CD8-positive, alpha-beta T cell (primary cell): ENCODE measurements at regions of chr11 and their contacts with region 1.

Region 1: DNA sequence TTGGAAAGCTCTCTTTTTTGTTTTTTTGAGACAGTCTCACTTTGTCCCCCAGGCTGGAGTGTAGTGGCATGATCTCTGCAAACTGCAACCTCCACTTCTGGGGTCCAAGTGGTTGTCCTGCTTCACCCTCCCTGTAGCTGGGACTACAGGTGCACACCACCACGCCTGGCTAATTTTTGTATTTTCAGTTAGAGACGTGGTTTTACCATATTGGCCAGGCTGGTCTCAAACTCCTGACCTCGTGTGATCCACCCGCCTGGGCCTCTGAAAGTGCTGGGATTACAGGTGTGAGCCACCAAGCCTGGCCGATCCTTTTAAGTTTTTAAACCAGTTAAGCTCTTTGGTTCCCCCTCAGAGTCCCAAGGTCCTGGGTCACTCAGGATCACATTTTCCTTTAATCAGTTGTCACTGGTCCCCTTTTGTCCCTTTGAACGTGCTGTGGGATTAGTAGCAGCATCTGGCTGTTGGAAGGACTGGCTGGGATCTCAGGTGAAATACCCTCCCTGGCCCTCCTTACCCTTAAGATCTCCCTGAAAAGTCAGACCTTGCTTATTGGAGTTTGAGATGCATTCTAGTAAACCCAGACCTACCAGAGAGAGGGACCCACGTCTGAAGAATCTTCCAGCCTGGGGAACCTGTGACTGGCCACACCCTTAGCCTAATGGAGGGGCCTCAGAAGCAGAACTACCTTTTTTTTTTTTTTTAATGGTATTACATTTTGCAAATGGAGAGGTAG is 8.1 kb downstream of the MALAT1 start:
- DNase-seq: peak in 6 of 9 experiments; percentile 32 to 74 (median 62)
- ATAC-seq: peak; percentile 37
- H3K4me3 ChIP-seq: peak overlapping the region in 1 of 2 experiments; percentile 72
- H3K4me3 Mint-ChIP-seq: no peak overlapping the region
- H3K27ac ChIP-seq: peak overlapping the region; percentile 34 to 67
- H3K27ac Mint-ChIP-seq: peak overlapping the region; percentile 89
- H3K4me1 ChIP-seq: peaks cover 41% of the 10 kb centered on the region
- H3K4me1 Mint-ChIP-seq: peaks cover 51% of the 10 kb centered on the region
- H3K27me3 ChIP-seq: no peaks in the 10 kb centered on the region
- H3K27me3 Mint-ChIP-seq: no peaks in the 10 kb centered on the region
- CTCF ChIP-seq: no peak

Region 2: DNA sequence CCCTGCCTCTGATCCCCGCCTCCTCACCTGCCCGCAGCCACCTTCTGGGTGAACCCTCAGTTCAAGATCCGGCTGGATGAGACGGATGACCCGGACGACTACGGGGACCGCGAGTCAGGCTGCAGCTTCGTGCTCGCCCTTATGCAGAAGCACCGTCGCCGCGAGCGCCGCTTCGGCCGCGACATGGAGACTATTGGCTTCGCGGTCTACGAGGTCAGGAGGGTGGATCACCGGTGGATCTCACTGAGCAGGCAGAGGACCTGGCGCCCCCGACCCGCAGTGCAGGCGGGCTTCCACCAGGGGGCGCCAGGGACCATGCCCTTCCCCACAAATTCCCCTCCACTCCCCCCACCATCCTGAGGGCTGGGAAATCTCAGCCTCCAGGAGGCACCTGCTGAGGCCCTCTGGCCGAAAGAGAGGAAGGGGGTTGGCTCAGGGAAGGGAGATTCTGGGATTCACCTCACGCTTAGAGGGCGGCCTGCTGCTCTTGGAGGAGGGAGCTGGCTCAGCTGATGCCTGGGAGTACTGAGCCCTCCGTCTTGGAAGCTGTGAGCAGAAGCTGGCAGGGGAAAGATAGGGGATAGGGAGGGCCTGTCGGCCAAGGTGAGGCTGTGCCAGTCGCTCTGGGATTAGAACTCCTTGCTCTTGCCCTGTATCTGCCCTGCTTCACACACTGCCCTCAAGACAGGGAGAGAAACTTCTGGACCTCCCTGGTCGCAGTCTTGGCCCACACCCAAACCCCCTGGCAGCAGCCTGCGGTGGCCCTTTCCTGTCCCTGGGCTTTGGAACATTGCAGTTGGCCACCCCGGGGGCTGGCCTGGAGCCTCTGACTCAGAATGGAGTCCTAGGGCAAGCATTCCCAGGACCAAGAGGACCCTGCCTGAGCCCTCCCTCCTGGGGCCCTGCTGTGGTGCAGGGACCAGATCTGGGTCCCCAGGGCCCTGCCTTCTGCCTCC is 302.0 kb before region 1 on chr11:
- CTCF ChIA-PET with region 1: interaction called, 3 read pairs
- POLR2A ChIA-PET with region 1: no interaction called
- intact Hi-C with region 1: loop called in 1 of 2 experiments (anchors 5 kb)
- DNase-seq: peak in 7 of 9 experiments; percentile 16 to 66 (median 63)
- ATAC-seq: peak; percentile 75
- H3K4me3 ChIP-seq: no peak overlapping the region
- H3K4me3 Mint-ChIP-seq: no peak overlapping the region
- H3K27ac ChIP-seq: no peak overlapping the region
- H3K27ac Mint-ChIP-seq: no peak overlapping the region
- H3K4me1 ChIP-seq: no peaks in the 10 kb centered on the region
- H3K4me1 Mint-ChIP-seq: peaks cover 4% of the 10 kb centered on the region
- H3K27me3 ChIP-seq: no peaks in the 10 kb centered on the region
- H3K27me3 Mint-ChIP-seq: no peaks in the 10 kb centered on the region
- CTCF ChIP-seq: peak; percentile 93

Region 3: GRCh38 chr11:65274735-65275682 is 231.9 kb before region 1 on chr11:
- CTCF ChIA-PET with region 1: no interaction called
- POLR2A ChIA-PET with region 1: no interaction called
- intact Hi-C with region 1: loop called (anchors 1 to 2 kb)
- DNase-seq: peak in 5 of 9 experiments; percentile 13 to 59 (median 44)
- ATAC-seq: peak; percentile 48
- H3K4me3 ChIP-seq: no peak overlapping the region
- H3K4me3 Mint-ChIP-seq: no peak overlapping the region
- H3K27ac ChIP-seq: no peak overlapping the region
- H3K27ac Mint-ChIP-seq: no peak overlapping the region
- H3K4me1 ChIP-seq: no peaks in the 10 kb centered on the region
- H3K4me1 Mint-ChIP-seq: no peaks in the 10 kb centered on the region
- H3K27me3 ChIP-seq: no peaks in the 10 kb centered on the region
- H3K27me3 Mint-ChIP-seq: no peaks in the 10 kb centered on the region
- CTCF ChIP-seq: peak; percentile 44

Region 4: GRCh38 chr11:65382033-65382807 is 124.7 kb before region 1 on chr11 and contains the start of gene SLC25A45:
- CTCF ChIA-PET with region 1: interaction called, 11 read pairs
- POLR2A ChIA-PET with region 1: interaction called, 235 read pairs
- intact Hi-C with region 1: loop called (anchors 1 kb)
- DNase-seq: peak; percentile 77 to 96 (median 92)
- ATAC-seq: peak; percentile 83
- H3K4me3 ChIP-seq: peak within 1 kb of the TSS; percentile 60 to 98
- H3K4me3 Mint-ChIP-seq: peak within 1 kb of the TSS; percentile 87
- H3K27ac ChIP-seq: peak within 1 kb of the TSS; percentile 97 to 100
- H3K27ac Mint-ChIP-seq: peak within 1 kb of the TSS; percentile 99
- H3K4me1 ChIP-seq: peaks cover 54% of the 10 kb centered on the region
- H3K4me1 Mint-ChIP-seq: peaks cover 42% of the 10 kb centered on the region
- H3K27me3 ChIP-seq: no peaks in the 10 kb centered on the region
- H3K27me3 Mint-ChIP-seq: no peaks in the 10 kb centered on the region
- CTCF ChIP-seq: peak; percentile 81
- total RNA-seq, gene SLC25A45: 27.8 to 29.6 TPM

Region 5: GRCh38 chr11:65477149-65477965 is 29.6 kb before region 1 on chr11:
- CTCF ChIA-PET with region 1: interaction called, 50 read pairs
- POLR2A ChIA-PET with region 1: interaction called, 506 read pairs
- intact Hi-C with region 1: no loop called
- DNase-seq: peak; percentile 71 to 94 (median 91)
- ATAC-seq: peak; percentile 78
- H3K4me3 ChIP-seq: peak overlapping the region; percentile 89 to 92
- H3K4me3 Mint-ChIP-seq: peak overlapping the region; percentile 100
- H3K27ac ChIP-seq: peak overlapping the region; percentile 89 to 98
- H3K27ac Mint-ChIP-seq: peak overlapping the region; percentile 100
- H3K4me1 ChIP-seq: peaks cover 12% of the 10 kb centered on the region
- H3K4me1 Mint-ChIP-seq: peaks cover 21% of the 10 kb centered on the region
- H3K27me3 ChIP-seq: no peaks in the 10 kb centered on the region
- H3K27me3 Mint-ChIP-seq: no peaks in the 10 kb centered on the region
- CTCF ChIP-seq: no peak

Region 6: GRCh38 chr11:66001942-66002647 is 495.2 kb after region 1 on chr11 and contains the starts of genes BANF1 and EIF1AD:
- CTCF ChIA-PET with region 1: no interaction called
- POLR2A ChIA-PET with region 1: no interaction called
- intact Hi-C with region 1: no loop called
- DNase-seq: peak; percentile 85 to 98 (median 92)
- ATAC-seq: peak; percentile 83
- H3K4me3 ChIP-seq: peak within 1 kb of the TSS; percentile 80 to 98
- H3K4me3 Mint-ChIP-seq: peak within 1 kb of the TSS; percentile 99
- H3K27ac ChIP-seq: peak within 1 kb of the TSS; percentile 93 to 95
- H3K27ac Mint-ChIP-seq: peak within 1 kb of the TSS; percentile 98
- H3K4me1 ChIP-seq: peaks cover 21% of the 10 kb centered on the region
- H3K4me1 Mint-ChIP-seq: peaks cover 43% of the 10 kb centered on the region
- H3K27me3 ChIP-seq: no peaks in the 10 kb centered on the region
- H3K27me3 Mint-ChIP-seq: no peaks in the 10 kb centered on the region
- CTCF ChIP-seq: no peak
- total RNA-seq, gene BANF1: 31.6 to 34.0 TPM
- total RNA-seq, gene EIF1AD: 119 to 126 TPM